Activated CD4-positive, alpha-beta T cell treated with anti-CD3 and anti-CD28 coated beads, Interleukin-2, amount 10 ng/mL, durations not matched to agents 7 days and 5 days (primary cell): ENCODE measurements at regions of chr2 and their contacts with region 1.

Region 1: DNA sequence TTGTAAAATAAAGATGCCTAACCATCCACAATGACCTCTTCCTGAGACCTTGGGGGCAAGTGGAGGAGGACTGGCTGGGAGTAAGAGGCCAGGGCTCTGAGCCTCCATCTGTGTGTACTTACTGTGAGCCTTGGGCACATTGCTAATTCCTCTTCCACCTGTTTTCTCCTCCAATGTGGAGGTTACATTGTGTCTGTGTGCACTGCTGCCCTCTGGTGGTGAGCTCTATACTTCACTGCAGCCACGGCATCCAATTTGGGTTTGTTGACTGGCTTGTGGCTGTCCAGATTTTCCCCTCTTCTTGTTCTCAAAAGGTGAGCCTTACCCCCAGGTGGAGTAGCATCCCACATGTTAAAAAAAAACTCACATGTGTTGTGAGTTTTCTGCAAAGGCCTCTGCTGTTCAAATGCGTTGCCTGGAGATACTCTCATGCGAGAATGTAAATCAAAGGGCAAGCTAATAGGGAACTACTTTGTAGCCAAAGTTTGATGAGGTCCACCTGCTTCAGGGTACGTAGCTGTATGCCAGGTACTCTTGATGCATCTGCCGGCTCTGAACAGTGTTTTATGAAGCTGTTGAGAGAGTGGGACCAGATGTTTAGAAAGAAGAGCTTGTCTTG is 80.8 kb downstream of the APOB start:
- DNase-seq: peak; percentile 72
- H3K4me3 Mint-ChIP-seq: no peak overlapping the region
- H3K27ac Mint-ChIP-seq: no peak overlapping the region
- H3K4me1 Mint-ChIP-seq: no peaks in the 10 kb centered on the region
- H3K27me3 Mint-ChIP-seq: peaks cover 10% of the 10 kb centered on the region

Region 2: GRCh38 chr2:20661067-20661980 is 301.7 kb before region 1 on chr2:
- CTCF ChIA-PET with region 1: interaction called, 26 read pairs
- POLR2A ChIA-PET with region 1: no interaction called
- DNase-seq: peak; percentile 73
- H3K4me3 Mint-ChIP-seq: no peak overlapping the region
- H3K27ac Mint-ChIP-seq: no peak overlapping the region
- H3K4me1 Mint-ChIP-seq: peaks cover 7% of the 10 kb centered on the region
- H3K27me3 Mint-ChIP-seq: peaks cover 75% of the 10 kb centered on the region

Region 3: DNA sequence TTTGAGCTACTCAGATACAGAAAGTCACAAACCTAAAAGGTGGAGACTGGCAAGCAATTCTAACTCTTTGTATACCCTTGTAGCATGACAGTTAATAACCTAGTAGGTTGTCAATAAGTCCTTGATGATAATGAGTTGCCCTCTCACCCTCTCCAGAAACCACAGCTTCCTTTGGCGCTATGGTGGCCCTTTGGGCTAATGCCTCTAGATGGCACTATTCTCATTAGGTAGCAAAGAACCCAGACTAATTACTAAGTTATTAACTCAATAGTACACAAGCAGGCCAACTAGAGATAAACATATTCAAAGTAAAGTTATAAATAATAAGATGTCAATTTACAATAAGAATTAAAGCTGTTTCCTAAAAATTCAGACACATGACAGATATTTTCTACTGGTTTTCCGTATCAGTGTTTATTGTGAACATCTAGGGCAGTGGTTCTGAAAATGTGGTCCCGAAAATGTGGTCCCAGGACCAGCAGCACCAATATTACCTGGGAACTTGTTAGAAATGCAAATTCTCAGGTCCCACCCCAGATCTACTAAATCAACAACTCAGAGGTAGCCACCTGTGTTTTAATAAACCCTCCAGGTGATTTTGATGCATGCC is 181.3 kb before region 1 on chr2:
- CTCF ChIA-PET with region 1: interaction called, 11 read pairs
- POLR2A ChIA-PET with region 1: no interaction called
- DNase-seq: no peak
- H3K4me3 Mint-ChIP-seq: no peak overlapping the region
- H3K27ac Mint-ChIP-seq: no peak overlapping the region
- H3K4me1 Mint-ChIP-seq: no peaks in the 10 kb centered on the region
- H3K27me3 Mint-ChIP-seq: no peaks in the 10 kb centered on the region